ENCODE measurements at regions of chr6 and their contacts with region 1.

Region 1: DNA sequence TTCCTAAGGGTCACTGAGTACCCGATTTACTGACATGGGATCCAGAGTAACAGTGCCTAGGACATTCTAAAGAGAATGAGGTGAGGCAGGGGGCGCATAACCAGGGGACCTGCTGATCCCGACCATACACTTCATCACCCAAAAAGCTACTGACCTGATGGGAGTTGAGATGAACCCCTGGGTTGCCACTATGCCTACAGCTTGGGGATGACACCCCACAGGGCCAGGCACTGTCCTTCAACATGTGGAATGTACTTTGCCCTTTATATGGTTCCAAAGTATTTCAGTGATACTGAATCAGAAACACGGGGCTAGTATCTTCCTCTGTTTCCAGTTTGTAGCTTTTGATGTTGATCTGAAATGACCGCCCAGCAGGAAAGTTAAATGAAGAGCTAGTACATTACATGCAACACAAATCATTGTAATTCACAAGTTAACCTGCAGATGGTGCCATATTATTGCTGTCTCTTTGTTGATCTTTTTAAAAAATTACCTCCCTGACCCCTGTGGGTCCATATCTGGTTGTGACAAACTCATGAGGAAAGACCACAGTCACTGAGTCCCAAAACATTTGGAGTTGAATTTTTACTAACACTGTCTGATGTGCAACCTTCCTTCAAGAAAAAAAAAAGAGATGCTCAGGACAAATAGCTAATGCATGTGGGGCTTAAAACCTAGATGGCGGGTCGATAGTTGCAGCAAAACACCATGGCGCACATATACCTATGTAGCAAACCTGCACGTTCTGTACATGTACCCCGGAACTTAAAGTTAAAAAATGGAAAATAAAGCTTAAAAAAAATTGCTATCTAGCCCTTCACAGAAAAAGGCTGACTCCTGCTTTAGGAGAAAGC is 42.7 kb upstream of the GCNT2 start:
- DNase-seq: no peak
- ATAC-seq: no peak
- H3K4me3 ChIP-seq: no peak overlapping the region
- H3K27ac ChIP-seq: no peak overlapping the region
- H3K4me1 ChIP-seq: no peaks in the 10 kb centered on the region
- H3K27me3 ChIP-seq: no peaks in the 10 kb centered on the region

Region 2: GRCh38 chr6:9810276-9810675 is 668.1 kb before region 1 on chr6:
- intact Hi-C with region 1: no loop called
- DNase-seq: no peak
- ATAC-seq: no peak
- H3K4me3 ChIP-seq: no peak overlapping the region
- H3K27ac ChIP-seq: no peak overlapping the region
- H3K4me1 ChIP-seq: no peaks in the 10 kb centered on the region
- H3K27me3 ChIP-seq: no peaks in the 10 kb centered on the region

Region 3: DNA sequence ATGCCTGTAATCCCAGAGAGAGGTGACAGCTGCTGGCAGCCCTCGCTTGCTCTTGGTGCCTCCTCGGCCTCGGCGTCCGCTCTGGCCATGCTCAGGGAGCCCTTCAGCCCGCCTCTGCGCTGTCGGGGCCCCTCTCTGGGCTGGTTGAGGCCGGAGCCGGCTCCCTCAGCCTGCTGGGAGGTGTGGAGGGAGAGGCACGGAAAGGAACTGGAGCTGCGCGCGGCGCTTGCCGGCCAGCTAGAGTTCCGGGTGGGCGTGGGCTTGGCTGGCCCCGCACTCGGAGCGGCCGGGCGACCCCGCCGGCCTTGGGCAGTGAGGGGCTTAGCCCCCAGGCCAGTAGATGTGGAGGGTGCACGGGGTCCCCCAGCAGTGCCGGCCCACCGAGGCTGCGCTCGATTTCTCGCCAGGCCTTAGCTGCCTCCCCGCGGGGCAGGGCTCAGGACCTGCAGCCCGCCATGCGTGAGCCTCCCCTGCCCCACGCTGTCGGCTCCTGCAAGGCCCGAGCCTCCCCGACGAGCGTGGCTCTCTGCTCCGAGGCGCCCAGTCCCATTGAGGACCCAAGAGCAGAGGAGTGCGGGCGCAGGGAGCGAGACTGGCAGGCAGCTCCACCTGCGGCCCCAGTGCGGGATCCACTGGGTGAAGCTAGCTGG is 181.4 kb after region 1 on chr6:
- intact Hi-C with region 1: no loop called
- DNase-seq: no peak
- ATAC-seq: no peak
- H3K4me3 ChIP-seq: no peak overlapping the region
- H3K27ac ChIP-seq: no peak overlapping the region
- H3K4me1 ChIP-seq: no peaks in the 10 kb centered on the region
- H3K27me3 ChIP-seq: no peaks in the 10 kb centered on the region

Region 4: GRCh38 chr6:10793695-10794094 is 315.3 kb after region 1 on chr6:
- intact Hi-C with region 1: loop called in 1 of 2 experiments (anchors 10 kb)
- DNase-seq: no peak
- ATAC-seq: no peak
- H3K4me3 ChIP-seq: no peak overlapping the region
- H3K27ac ChIP-seq: no peak overlapping the region
- H3K4me1 ChIP-seq: no peaks in the 10 kb centered on the region
- H3K27me3 ChIP-seq: no peaks in the 10 kb centered on the region

Region 5: DNA sequence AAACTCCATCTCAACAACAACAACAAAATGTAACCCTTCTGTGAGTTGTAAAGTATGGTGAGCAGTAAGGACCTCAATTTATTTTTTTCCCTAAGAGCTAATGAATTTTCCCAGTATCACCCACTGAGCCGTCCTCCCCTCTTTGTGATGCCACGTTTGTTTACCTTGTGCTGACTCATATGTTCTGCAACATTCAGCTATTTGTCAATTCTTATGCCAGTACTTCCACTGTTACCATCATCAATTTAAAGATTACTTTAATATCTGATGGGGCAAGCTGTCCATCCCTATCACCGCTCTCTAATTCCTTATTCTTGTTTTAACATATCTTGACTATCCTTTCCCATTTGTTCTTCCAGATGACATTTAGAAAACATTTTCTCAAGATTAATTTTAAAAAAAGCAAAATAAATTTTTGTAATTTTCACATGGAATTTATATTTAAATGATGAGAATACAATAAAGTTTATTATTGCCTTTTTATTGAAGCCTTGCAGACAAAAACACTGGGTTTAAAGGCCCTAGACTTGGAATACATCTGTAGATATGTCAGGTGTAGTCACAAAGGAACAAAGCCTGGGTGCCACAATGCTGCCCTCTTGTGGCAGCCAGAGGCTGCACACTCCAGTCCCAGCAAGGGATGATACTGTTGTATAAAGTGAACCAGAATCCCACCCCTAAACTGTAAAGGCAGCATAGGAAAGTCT is 322.6 kb after region 1 on chr6:
- intact Hi-C with region 1: loop called (anchors 2 to 10 kb)
- DNase-seq: peak in 1 of 2 donors; percentile 81
- ATAC-seq: peak; percentile 86
- H3K4me3 ChIP-seq: no peak overlapping the region
- H3K27ac ChIP-seq: no peak overlapping the region
- H3K4me1 ChIP-seq: no peaks in the 10 kb centered on the region
- H3K27me3 ChIP-seq: no peaks in the 10 kb centered on the region

Region 6: GRCh38 chr6:11064836-11065235 is 586.4 kb after region 1 on chr6:
- intact Hi-C with region 1: loop called in 1 of 2 experiments (anchors 2 kb)
- DNase-seq: no peak
- ATAC-seq: no peak
- H3K4me3 ChIP-seq: no peak overlapping the region
- H3K27ac ChIP-seq: no peak overlapping the region
- H3K4me1 ChIP-seq: no peaks in the 10 kb centered on the region
- H3K27me3 ChIP-seq: no peaks in the 10 kb centered on the region